ENCODE measurements at regions of chr2 and their contacts with region 1.

Region 1: DNA sequence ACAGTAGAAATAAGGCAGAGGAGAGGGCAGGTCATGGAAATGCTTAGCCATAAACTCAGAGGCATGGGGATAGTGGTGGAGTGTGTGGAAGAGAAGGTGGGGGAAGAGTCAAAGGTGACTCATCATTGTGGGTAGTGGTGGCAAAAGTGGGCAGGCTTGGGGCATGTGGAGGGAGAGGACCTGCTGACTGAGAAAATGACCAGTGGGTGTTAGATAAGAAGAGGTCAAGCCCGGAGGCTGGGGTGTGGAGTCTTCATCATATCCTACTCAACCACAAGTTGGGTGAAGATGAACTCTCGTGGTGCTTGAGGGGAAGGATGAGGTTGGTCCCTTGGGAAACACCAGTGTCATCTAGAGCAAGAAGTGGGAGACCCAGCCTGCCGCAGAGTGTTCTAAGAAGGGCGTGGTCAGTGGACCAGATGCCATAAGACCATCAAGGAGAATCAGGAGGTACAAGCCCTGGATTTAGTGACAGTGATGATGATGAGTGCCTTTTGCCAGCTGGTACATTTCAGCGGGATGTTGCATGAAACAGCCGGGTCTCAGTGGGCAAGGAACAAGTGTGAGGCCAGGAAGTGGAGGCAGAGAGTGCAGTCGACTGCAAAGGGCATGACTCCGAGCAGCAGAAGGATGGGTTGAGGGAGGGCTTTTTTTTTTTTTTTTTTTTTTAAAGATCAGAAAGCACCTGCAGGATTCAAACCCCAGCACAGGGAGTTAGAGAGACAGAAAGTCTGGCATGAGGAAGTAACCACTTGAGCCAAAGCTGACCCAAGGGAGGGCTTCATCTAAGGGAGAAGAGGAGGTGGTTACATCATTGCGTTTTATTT is 122.6 kb upstream of the SPRED2 start:
- DNase-seq: peak; percentile 35
- ATAC-seq: peak; percentile 63
- H3K4me3 Mint-ChIP-seq: no peak overlapping the region
- H3K27ac Mint-ChIP-seq: no peak overlapping the region
- H3K4me1 Mint-ChIP-seq: peaks cover 14% of the 10 kb centered on the region
- H3K27me3 Mint-ChIP-seq: peaks cover 10% of the 10 kb centered on the region
- CTCF ChIP-seq: no peak

Region 2: DNA sequence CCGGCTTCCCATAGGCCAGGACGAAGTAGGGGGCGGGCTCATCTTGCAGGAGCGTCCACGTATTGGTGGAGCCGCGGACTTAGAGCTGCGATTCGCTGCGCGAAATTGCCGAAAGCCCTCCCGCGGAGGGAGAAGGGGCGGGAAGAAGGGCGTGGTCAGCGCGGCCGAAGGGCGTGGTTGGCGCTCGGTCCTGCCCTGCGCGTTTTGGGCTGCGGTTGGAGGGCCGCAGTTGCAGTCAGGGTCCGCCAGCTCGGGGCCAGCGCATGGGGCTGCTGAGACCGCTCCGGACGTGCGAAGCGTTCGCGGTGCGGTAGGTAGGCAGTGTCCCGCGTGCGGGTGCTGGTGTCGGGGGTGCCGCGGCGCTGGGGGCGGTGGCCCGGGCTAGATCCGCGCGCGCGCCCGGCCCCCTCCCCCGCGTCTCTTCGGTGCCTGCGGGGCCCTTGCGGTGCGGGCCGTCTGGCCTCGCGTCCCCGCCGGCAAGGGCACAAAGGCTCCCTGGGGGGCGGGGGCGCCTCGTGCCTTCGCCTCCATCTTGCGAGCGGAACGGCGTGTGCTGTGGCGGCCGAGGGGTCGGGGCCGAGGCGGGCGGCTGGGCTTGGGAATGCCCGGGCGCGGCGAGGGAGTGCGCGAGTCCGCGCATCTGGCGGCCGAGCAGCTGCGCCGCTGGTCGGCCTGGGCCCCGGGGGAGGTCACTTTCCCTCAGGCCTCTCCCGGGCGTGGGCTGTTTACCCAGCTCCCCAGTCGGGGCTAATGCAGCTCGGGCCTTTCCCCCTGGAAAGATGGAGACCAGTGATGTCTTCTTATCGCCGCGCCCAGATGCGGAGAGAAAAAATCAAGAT is 498.5 kb before region 1 on chr2 and contains the start of gene CEP68:
- CTCF ChIA-PET with region 1: no interaction called
- POLR2A ChIA-PET with region 1: no interaction called
- intact Hi-C with region 1: loop called (anchors 10 kb)
- DNase-seq: peak; percentile 98
- ATAC-seq: peak; percentile 94
- H3K4me3 Mint-ChIP-seq: peak within 1 kb of the TSS; percentile 92
- H3K27ac Mint-ChIP-seq: peak within 1 kb of the TSS; percentile 84
- H3K4me1 Mint-ChIP-seq: peaks cover 49% of the 10 kb centered on the region
- H3K27me3 Mint-ChIP-seq: no peaks in the 10 kb centered on the region
- CTCF ChIP-seq: no peak
- total RNA-seq, gene CEP68: 6.0 to 6.3 TPM

Region 3: GRCh38 chr2:65264821-65265670 is 289.9 kb before region 1 on chr2:
- CTCF ChIA-PET with region 1: interaction called, 3 read pairs
- POLR2A ChIA-PET with region 1: no interaction called
- intact Hi-C with region 1: loop called (anchors 5 kb)
- DNase-seq: peak; percentile 20
- ATAC-seq: no peak
- H3K4me3 Mint-ChIP-seq: no peak overlapping the region
- H3K27ac Mint-ChIP-seq: no peak overlapping the region
- H3K4me1 Mint-ChIP-seq: peaks cover 18% of the 10 kb centered on the region
- H3K27me3 Mint-ChIP-seq: no peaks in the 10 kb centered on the region
- CTCF ChIP-seq: peak; percentile 87

Region 4: GRCh38 chr2:65382776-65383357 is 172.1 kb before region 1 on chr2:
- CTCF ChIA-PET with region 1: no interaction called
- POLR2A ChIA-PET with region 1: no interaction called
- intact Hi-C with region 1: loop called (anchors 5 kb)
- DNase-seq: peak; percentile 98
- ATAC-seq: peak; percentile 94
- H3K4me3 Mint-ChIP-seq: no peak overlapping the region
- H3K27ac Mint-ChIP-seq: no peak overlapping the region
- H3K4me1 Mint-ChIP-seq: peaks cover 32% of the 10 kb centered on the region
- H3K27me3 Mint-ChIP-seq: peaks cover 10% of the 10 kb centered on the region
- CTCF ChIP-seq: peak; percentile 47

Region 5: GRCh38 chr2:65576861-65577601 is 22.1 kb after region 1 on chr2:
- CTCF ChIA-PET with region 1: interaction called, 4 read pairs
- POLR2A ChIA-PET with region 1: no interaction called
- intact Hi-C with region 1: loop called (anchors 1 kb)
- DNase-seq: no peak
- ATAC-seq: no peak
- H3K4me3 Mint-ChIP-seq: no peak overlapping the region
- H3K27ac Mint-ChIP-seq: no peak overlapping the region
- H3K4me1 Mint-ChIP-seq: no peaks in the 10 kb centered on the region
- H3K27me3 Mint-ChIP-seq: peaks cover 5% of the 10 kb centered on the region
- CTCF ChIP-seq: no peak

Region 6: DNA sequence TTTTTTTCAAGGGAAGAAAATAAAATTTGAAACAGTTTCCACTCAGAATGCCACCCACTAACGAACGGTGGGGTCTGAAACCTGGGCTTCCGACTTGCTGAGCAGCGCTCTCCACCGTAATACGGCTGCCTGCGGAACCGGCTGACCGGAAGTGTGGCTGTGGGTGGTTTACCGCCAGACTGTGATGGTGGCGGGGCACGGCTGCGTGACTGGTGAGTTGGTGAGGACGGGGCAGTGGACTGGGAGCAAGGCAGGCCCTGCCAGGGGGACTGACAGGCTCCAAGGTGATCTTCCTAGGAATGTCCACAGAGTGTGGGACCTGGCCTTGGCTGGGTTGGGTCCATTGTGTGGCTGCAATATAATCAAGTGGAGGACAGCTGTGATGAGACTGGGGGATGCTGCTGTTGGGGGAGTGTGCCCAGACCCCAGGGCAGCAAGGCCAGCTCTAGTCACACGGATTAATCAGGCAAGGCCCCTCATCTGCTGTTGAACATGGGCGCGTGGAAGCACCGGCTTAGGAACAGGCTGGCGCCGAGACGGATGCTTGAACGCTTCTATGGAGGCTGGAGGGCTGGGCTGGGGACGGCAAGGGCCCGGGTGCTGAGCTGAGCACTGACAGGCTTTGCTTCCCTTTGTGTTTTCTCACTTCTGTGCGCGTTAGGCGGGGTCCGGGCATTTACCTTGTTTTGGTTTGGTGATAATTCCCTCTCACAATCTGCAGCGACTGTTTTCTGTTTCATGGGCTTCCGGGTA is 235.1 kb after region 1 on chr2:
- CTCF ChIA-PET with region 1: no interaction called
- POLR2A ChIA-PET with region 1: no interaction called
- intact Hi-C with region 1: no loop called
- DNase-seq: no peak
- ATAC-seq: no peak
- H3K4me3 Mint-ChIP-seq: no peak overlapping the region
- H3K27ac Mint-ChIP-seq: no peak overlapping the region
- H3K4me1 Mint-ChIP-seq: no peaks in the 10 kb centered on the region
- H3K27me3 Mint-ChIP-seq: no peaks in the 10 kb centered on the region
- CTCF ChIP-seq: no peak